AG04449 (cell line): ENCODE measurements at regions of chr17 and their contacts with region 1.

Region 1: DNA sequence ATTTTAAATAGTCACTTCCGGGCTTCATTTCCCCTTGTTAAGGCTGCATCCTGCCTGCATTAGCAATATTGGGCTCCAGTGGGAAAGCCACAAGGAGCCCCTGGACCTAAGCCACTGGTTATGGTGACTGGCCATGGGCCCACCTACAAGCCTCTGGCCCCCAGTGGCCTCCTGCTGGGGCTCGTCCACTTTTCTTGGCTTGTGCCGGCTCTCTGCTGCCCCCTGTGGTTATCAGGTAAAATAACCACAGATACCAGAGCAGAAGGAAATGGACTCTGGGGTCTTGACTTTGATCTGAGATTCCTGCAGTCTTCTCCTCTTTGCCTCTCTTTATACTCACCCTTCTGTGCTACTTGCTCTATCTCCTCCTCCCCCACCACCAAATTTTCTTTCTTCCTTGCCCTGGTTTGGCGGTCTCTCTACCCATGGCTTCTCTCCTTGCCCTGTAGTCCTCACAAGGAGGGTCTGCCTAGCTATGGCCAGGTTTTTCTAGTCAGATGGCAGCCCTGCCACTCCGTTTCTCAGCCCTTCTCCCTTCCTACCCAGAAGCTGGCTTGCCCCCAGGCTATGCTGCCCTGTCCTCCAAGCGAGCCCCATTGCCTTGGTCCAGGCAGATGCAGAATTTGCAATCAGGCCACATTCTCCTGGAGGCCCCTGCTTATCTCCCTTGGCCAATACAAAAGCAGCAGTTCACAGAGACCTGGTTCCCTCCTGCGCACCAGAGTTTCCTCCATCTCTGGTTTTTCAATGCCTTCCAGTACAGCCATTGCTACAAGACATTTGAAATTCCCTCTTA is 82.9 kb upstream of the RCVRN start:
- DNase-seq: no peak
- H3K4me3 ChIP-seq: no peak overlapping the region
- CTCF ChIP-seq: peak; percentile 64

Region 2: DNA sequence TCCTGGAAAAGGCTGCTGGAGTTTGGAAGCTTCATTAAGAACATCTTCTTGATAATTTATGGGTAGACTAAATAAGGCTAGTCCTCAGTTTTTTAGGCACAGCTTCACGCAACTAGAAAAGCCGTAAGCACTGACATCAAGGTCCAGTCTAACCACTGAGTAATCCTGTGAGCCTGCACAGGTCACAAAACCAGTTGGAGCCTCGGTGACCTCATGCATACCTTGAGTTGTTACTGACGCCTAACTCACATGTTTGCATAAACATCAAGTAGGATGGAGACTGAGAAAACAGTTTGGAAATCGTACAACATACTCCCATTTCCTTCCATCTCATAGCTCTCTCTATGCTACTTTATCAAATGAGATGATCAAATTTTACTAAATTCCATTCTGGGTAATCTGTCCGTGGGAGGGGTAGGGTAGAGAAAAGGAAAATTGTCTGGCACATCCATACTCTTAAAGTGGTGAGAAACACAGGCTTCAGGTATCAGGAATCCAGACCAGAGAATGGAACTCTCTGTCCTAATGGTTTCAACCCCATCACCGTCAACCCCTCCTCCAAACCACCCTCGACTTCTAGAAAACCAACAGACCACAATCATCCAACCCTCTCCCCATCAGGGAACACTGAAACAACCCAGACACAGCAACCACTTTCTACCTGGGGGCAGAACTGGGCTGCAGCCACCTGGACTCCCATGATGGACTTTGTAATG is 18.9 kb before region 1 on chr17:
- CTCF ChIA-PET with region 1: interaction called, 12 read pairs
- POLR2A ChIA-PET with region 1: no interaction called
- DNase-seq: no peak
- H3K4me3 ChIP-seq: no peak overlapping the region
- CTCF ChIP-seq: no peak